WTC11 (cell line): ENCODE measurements at regions of chr3 and their contacts with region 1.

Region 1: GRCh38 chr3:112293368-112294321 is at the start of gene SLC9C1:
- DNase-seq: peak; percentile 34
- ATAC-seq: peak; percentile 83
- H3K4me3 Mint-ChIP-seq: peak within 1 kb of the TSS; percentile 57
- H3K27ac Mint-ChIP-seq: peak within 1 kb of the TSS; percentile 95
- H3K4me1 Mint-ChIP-seq: peaks cover 39% of the 10 kb centered on the region
- H3K27me3 Mint-ChIP-seq: no peaks in the 10 kb centered on the region
- CTCF ChIP-seq: 0 out of 2 replicates have a peak, but pooled peaks have one; percentile 15
- total RNA-seq, gene SLC9C1: 1.4 to 3.5 TPM (median 2.5 TPM) in 3 replicates

Region 2: DNA sequence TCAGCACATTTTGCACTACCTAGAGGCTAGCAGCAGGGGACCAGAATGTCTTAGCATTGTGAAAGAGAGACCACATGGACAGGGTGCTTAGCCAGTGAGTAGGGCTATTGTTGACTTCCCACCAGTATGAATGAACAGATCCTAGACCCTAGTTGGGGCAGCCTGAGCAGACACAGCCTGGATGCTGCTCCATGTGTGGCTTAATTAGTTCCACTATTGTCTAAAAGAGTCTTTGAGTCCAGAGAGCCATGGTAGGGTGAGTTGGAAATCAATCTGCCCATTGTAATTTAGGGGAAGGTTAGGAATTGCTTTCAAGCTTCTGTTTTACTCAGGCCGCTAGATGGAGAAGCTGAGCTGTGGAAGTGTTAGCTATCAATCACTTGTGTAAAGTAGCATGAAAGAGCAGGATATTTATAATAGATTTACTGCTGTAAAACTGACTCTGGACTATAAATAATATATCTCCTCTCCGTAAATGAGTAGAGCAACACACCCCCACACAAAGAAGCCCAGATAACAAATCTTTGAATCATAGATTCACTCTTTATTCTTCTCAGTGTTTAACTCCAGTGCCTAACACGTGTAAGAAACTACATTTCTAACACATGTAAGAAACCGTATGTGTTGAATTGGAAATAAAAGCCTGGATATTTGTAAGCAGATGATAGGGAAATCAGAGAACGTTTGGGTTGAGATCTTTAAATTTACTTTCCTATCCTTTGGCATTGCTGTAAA is 156.5 kb before region 1 on chr3:
- CTCF ChIA-PET with region 1: interaction called, 20 read pairs
- POLR2A ChIA-PET with region 1: no interaction called
- DNase-seq: peak; percentile 36
- ATAC-seq: peak; percentile 94
- H3K4me3 Mint-ChIP-seq: no peak overlapping the region
- H3K27ac Mint-ChIP-seq: peak overlapping the region; percentile 90
- H3K4me1 Mint-ChIP-seq: peaks cover 46% of the 10 kb centered on the region
- H3K27me3 Mint-ChIP-seq: no peaks in the 10 kb centered on the region
- CTCF ChIP-seq: no peak

Region 3: GRCh38 chr3:112321867-112322649 is 28.4 kb after region 1 on chr3:
- CTCF ChIA-PET with region 1: interaction called, 26 read pairs
- POLR2A ChIA-PET with region 1: no interaction called
- DNase-seq: no peak
- ATAC-seq: peak; percentile 67
- H3K4me3 Mint-ChIP-seq: peak overlapping the region; percentile 12
- H3K27ac Mint-ChIP-seq: peak overlapping the region; percentile 88
- H3K4me1 Mint-ChIP-seq: peaks cover 52% of the 10 kb centered on the region
- H3K27me3 Mint-ChIP-seq: no peaks in the 10 kb centered on the region
- CTCF ChIP-seq: no peak

Region 4: DNA sequence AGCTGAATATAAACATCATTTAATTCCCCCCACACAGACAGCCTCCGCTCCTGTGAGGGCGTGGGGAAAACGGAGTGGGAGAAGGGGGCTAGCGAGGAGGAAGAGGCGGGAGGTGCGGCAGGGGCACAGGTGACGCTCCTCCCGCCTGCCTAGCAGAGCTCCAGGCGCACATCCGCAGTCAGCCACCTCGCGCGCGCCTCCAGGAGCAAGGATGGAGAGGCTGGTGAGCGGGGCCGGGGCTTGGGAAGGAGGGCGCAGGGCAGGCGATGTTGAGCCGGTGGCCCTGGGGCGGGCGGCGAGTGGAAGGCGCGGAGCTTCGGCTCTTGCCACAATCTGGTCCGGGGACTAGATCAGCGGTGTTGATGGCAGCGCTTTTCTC is 39.3 kb after region 1 on chr3 and contains the start of gene CD200:
- CTCF ChIA-PET with region 1: interaction called, 37 read pairs
- POLR2A ChIA-PET with region 1: interaction called, 12 read pairs
- DNase-seq: peak; percentile 85
- ATAC-seq: peak; percentile 86
- H3K4me3 Mint-ChIP-seq: peak within 1 kb of the TSS; percentile 88
- H3K27ac Mint-ChIP-seq: peak within 1 kb of the TSS; percentile 96
- H3K4me1 Mint-ChIP-seq: peaks cover 40% of the 10 kb centered on the region
- H3K27me3 Mint-ChIP-seq: no peaks in the 10 kb centered on the region
- CTCF ChIP-seq: no peak
- total RNA-seq, gene CD200: 46.8 to 56.1 TPM (median 54.1 TPM) in 3 replicates

Region 5: GRCh38 chr3:112519424-112520001 is 225.9 kb after region 1 on chr3:
- CTCF ChIA-PET with region 1: interaction called, 10 read pairs
- POLR2A ChIA-PET with region 1: no interaction called
- DNase-seq: no peak
- ATAC-seq: peak; percentile 87
- H3K4me3 Mint-ChIP-seq: no peak overlapping the region
- H3K27ac Mint-ChIP-seq: no peak overlapping the region
- H3K4me1 Mint-ChIP-seq: peaks cover 4% of the 10 kb centered on the region
- H3K27me3 Mint-ChIP-seq: no peaks in the 10 kb centered on the region
- CTCF ChIP-seq: peak; percentile 71